Naive thymus-derived CD4-positive, alpha-beta T cell (primary cell): ENCODE measurements at regions of chr10 and their contacts with region 1.

Region 1: GRCh38 chr10:14971867-14972448 is 12.8 kb downstream of the MEIG1 start:
- DNase-seq: peak in 8 of 9 donors; percentile 16 to 62 (median 48)
- ATAC-seq: peak; percentile 73
- H3K4me3 ChIP-seq: no peak overlapping the region
- H3K4me3 Mint-ChIP-seq: no peak overlapping the region
- H3K27ac ChIP-seq: no peak overlapping the region
- H3K27ac Mint-ChIP-seq: no peak overlapping the region
- H3K4me1 ChIP-seq: no peaks in the 10 kb centered on the region
- H3K4me1 Mint-ChIP-seq: peaks cover 0 to 6% (median 5%) of the 10 kb centered on the region in 7 donors
- H3K27me3 ChIP-seq: peaks cover 0 to 4% of the 10 kb centered on the region in 2 donors
- H3K27me3 Mint-ChIP-seq: peaks cover 8 to 28% (median 25%) of the 10 kb centered on the region in 5 donors

Region 2: DNA sequence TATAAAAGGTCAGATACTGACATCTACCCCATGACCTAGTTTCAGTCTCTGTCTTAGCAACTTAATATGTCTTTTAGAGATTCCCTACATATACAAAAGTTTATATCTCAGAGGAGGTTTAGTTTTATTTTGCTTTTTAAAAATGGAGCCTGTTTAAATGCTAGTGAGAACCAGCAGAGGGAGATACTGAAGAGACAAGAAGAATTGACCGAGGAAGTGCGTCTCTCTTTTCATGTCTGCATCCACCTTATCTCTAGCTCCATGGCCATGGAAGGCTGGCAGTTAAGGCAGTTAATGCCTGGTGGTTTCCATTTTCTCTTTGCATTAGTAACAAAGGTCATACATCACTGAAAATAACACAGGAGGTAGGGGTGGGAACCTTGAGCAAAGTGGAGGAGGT is 82.6 kb before region 1 on chr10:
- CTCF ChIA-PET with region 1: interaction called, 4 read pairs
- POLR2A ChIA-PET with region 1: no interaction called
- intact Hi-C with region 1: loop called in 1 of 2 experiments (anchors 1 kb)
- DNase-seq: peak in 3 of 9 donors; percentile 16 to 23 (median 17)
- ATAC-seq: peak; percentile 47
- H3K4me3 ChIP-seq: no peak overlapping the region
- H3K4me3 Mint-ChIP-seq: no peak overlapping the region
- H3K27ac ChIP-seq: no peak overlapping the region
- H3K27ac Mint-ChIP-seq: peak overlapping the region in 2 of 9 donors; percentile 41 to 64
- H3K4me1 ChIP-seq: peaks cover 0 to under 1% of the 10 kb centered on the region in 2 donors
- H3K4me1 Mint-ChIP-seq: peaks cover 3 to 10% (median 6%) of the 10 kb centered on the region in 7 donors
- H3K27me3 ChIP-seq: no peaks in the 10 kb centered on the region
- H3K27me3 Mint-ChIP-seq: no peaks in the 10 kb centered on the region

Region 3: GRCh38 chr10:15015451-15015850 is 43.5 kb after region 1 on chr10:
- CTCF ChIA-PET with region 1: no interaction called
- POLR2A ChIA-PET with region 1: no interaction called
- intact Hi-C with region 1: no loop called
- DNase-seq: no peak
- ATAC-seq: no peak
- H3K4me3 ChIP-seq: no peak overlapping the region
- H3K4me3 Mint-ChIP-seq: no peak overlapping the region
- H3K27ac ChIP-seq: no peak overlapping the region
- H3K27ac Mint-ChIP-seq: no peak overlapping the region
- H3K4me1 ChIP-seq: no peaks in the 10 kb centered on the region
- H3K4me1 Mint-ChIP-seq: no peaks in the 10 kb centered on the region
- H3K27me3 ChIP-seq: no peaks in the 10 kb centered on the region
- H3K27me3 Mint-ChIP-seq: peaks cover 0 to 3% (median 0%) of the 10 kb centered on the region in 5 donors